Activated T-helper 1 cell treated with anti-CD3 and anti-CD28 coated beads, Interleukin-12 subunit alpha, Interleukin-12 subunit beta, Interleukin-2, Interleukin-4 antibody, amounts not matched to agents 30 ng/mL and 10 ng/mL and 1 ng/mL, durations not matched to agents 14 hours and 24 hours and 36 hours (primary cell): ENCODE measurements at regions of chr11 and their contacts with region 1.

Region 1: GRCh38 chr11:1701091-1701807 is 4.3 kb downstream of the KRTAP5-6 start:
- DNase-seq: no peak
- H3K4me3 Mint-ChIP-seq: no peak overlapping the region
- H3K27ac Mint-ChIP-seq: no peak overlapping the region
- H3K4me1 Mint-ChIP-seq: peaks cover 22% of the 10 kb centered on the region
- H3K27me3 Mint-ChIP-seq: peaks cover 8% of the 10 kb centered on the region

Region 2: GRCh38 chr11:1772270-1773130 is 71.3 kb after region 1 on chr11:
- intact Hi-C with region 1: loop called (anchors 5 kb)
- DNase-seq: peak; percentile 51
- H3K4me3 Mint-ChIP-seq: peak overlapping the region; percentile 71
- H3K27ac Mint-ChIP-seq: peak overlapping the region; percentile 85
- H3K4me1 Mint-ChIP-seq: peaks cover 27% of the 10 kb centered on the region
- H3K27me3 Mint-ChIP-seq: peaks cover 4% of the 10 kb centered on the region